ENCODE measurements at regions of chr7 and their contacts with region 1.

Region 1: DNA sequence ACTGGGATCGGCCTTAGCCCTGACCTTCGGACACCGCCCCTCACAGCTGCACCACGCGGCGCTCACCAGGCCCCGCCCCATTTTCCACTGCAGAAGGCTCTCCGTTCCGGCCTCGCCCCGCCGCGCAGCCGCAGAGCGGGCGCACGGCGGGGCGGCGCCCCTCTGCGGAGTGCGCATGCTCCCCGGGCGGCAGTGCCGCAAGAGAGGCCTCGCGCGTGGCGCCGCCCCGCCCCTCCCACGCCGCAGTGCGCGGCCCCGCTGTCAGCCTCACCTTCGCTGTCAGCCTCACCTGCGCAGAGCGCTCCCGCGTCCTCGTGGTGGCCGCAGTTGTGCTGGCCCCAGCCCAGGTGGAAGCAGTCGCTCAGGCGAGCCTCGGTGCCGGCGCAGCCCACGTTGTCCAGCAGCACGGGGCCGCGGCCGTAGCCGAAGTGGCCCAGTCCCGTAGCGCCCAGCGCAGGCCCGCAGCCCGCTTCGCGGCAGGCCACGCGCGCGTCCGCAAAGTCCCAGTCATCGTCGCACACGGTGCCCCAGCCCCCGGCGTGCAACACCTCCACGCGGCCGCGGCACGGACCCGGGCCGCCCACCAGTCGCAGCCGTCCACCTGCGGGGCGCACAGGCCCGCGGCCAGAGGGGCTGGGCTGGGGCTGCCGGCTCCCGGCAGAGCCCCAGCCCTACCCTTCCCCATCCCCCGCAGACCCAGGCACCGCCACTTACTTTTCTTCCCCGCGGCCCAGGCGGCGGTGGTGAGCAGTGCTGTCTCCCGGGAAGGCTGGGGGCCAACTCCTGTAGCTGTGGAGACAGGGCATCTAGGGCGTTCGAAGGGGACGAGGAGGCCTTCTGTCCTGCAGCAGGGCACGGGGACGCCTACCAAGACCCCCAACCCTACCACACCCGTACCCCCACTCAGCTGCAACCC is 16.1 kb downstream of the SSC4D start:
- DNase-seq: peak; percentile 56 to 96
- H3K4me3 ChIP-seq: peak overlapping the region; percentile 70 to 71
- H3K27ac ChIP-seq: peak overlapping the region; percentile 57 to 80
- H3K4me1 ChIP-seq: peaks cover 5 to 11% of the 10 kb centered on the region in 2 donors
- H3K27me3 ChIP-seq: no peaks in the 10 kb centered on the region
- CTCF ChIP-seq: no peak

Region 2: GRCh38 chr7:76302347-76303201 is 90.8 kb before region 1 on chr7 and contains the start of gene HSPB1:
- intact Hi-C with region 1: no loop called
- DNase-seq: peak; percentile 90 to 99
- H3K4me3 ChIP-seq: peak within 1 kb of the TSS; percentile 86 to 99
- H3K27ac ChIP-seq: peak within 1 kb of the TSS; percentile 93 to 99
- H3K4me1 ChIP-seq: peaks cover 5 to 24% of the 10 kb centered on the region in 2 donors
- H3K27me3 ChIP-seq: no peaks in the 10 kb centered on the region
- CTCF ChIP-seq: peak in 1 of 3 experiments; percentile 23
- total RNA-seq, gene HSPB1: 3,584 TPM

Region 3: DNA sequence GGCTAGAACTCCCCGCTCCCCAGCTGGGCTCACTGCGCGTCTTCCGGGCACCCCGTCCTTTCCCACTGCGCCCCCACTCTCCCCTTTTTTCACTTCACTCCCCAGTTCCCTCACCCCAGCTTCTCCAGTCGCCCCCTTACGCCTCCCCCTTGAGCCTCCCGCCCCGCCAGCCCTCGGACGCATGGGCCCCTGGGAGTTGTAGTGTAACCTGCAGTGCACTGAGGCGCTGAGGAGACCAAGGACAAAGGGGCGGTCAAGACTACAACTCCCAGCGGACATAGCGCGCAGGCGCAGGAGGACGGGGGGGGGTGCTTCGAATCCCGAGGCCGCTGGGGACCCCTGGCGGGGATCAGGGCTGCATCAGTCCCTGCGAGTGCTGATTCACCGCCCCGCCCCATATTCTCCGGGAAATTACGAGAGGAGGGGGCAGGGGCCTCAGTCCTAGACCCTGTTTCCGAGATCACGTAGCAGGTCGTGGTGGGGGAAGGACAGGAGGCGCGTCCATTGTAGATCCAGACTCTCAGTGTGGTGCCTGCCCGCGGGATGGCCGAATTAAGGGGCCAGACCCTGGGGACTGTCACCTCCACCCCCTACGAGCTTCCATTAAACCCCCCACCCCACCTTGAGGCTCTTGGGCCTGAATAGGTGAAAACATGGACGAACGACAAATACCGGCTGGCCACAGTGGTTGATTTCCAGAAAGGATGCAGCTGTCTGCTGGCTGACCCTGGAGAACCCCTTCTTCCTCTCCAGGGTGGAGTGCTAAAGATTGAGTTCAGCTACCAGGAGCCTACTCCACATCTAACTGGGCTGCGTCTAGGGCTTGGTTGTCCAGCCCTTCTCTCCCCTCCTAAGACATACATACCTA is 34.0 kb before region 1 on chr7:
- intact Hi-C with region 1: loop called (anchors 1 kb)
- DNase-seq: peak; percentile 93 to 98
- H3K4me3 ChIP-seq: peak overlapping the region; percentile 81 to 95
- H3K27ac ChIP-seq: peak overlapping the region; percentile 98 to 99
- H3K4me1 ChIP-seq: peaks cover 4 to 28% of the 10 kb centered on the region in 2 donors
- H3K27me3 ChIP-seq: no peaks in the 10 kb centered on the region
- CTCF ChIP-seq: peak; percentile 64 to 78 (median 72)

Measured in ascending aorta (tissue), 2 donors.